ENCODE measurements at regions of chr17 and their contacts with region 1.

Region 1: GRCh38 chr17:28763804-28764266 is 20.0 kb downstream of the TRAF4 start:
- DNase-seq: peak; percentile 31 to 84 (median 70)
- ATAC-seq: peak; percentile 61 to 82 (median 75)
- H3K4me3 ChIP-seq: no peak overlapping the region
- H3K4me3 Mint-ChIP-seq: no peak overlapping the region
- H3K27ac ChIP-seq: no peak overlapping the region
- H3K27ac Mint-ChIP-seq: peak overlapping the region; percentile 53 to 73
- H3K4me1 ChIP-seq: no peaks in the 10 kb centered on the region
- H3K4me1 Mint-ChIP-seq: peaks cover 3 to 6% (median 4%) of the 10 kb centered on the region in 3 donors
- H3K27me3 ChIP-seq: no peaks in the 10 kb centered on the region
- H3K27me3 Mint-ChIP-seq: no peaks in the 10 kb centered on the region

Region 2: DNA sequence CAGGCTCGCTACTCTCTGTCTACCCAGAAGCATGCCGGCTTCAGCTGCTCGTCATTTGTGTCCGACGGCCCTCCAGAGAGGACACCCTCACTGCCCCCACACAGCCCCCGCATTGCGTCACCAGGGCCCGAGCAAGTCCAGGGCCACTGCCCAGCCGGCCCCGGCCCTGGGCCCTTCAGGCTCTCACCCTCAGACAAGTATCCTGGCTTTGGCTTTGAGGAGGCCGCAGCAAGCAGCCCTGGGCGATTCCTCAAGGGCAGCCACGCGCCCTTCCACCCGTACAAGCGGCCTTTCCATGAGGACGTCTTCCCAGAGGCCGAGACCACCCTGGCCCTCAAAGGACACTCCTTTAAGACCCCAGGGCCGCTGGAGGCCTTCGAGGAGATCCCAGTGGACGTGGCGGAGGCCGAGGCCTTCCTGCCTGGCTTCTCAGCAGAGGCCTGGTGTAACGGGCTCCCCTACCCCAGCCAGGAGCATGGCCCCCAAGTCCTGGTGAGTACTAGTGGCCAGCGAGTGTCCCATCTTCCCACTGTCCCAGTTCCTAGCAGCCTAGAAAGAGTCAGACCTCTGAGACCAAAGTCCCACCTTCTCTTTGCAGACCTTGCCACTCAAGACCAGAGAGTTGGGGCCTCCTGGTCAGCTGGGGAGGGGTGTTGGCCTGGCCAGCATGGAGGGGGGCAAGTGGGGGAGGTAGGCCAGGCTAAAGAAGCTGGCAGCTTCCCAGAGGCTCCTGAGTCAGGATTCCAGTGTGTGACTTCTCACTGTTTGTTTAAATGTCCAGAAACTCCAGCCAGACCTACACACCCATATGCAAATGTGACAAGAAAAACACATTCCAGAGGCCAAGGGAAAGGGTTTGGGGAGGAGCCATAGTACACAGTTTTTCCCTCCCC is 239.1 kb before region 1 on chr17:
- CTCF ChIA-PET with region 1: no interaction called
- POLR2A ChIA-PET with region 1: no interaction called
- DNase-seq: no peak
- ATAC-seq: no peak
- H3K4me3 ChIP-seq: no peak overlapping the region
- H3K4me3 Mint-ChIP-seq: no peak overlapping the region
- H3K27ac ChIP-seq: no peak overlapping the region
- H3K27ac Mint-ChIP-seq: no peak overlapping the region
- H3K4me1 ChIP-seq: no peaks in the 10 kb centered on the region
- H3K4me1 Mint-ChIP-seq: no peaks in the 10 kb centered on the region
- H3K27me3 ChIP-seq: peaks cover 0 to 4% of the 10 kb centered on the region in 2 experiments
- H3K27me3 Mint-ChIP-seq: no peaks in the 10 kb centered on the region

Region 3: GRCh38 chr17:28547623-28548416 is 216.0 kb before region 1 on chr17:
- CTCF ChIA-PET with region 1: no interaction called
- POLR2A ChIA-PET with region 1: no interaction called
- DNase-seq: peak in 31 of 35 experiments; percentile 16 to 71 (median 37)
- ATAC-seq: peak in 2 of 4 experiments; percentile 14 to 25
- H3K4me3 ChIP-seq: no peak overlapping the region
- H3K4me3 Mint-ChIP-seq: peak overlapping the region; percentile 28 to 97 (median 46)
- H3K27ac ChIP-seq: peak overlapping the region; percentile 94
- H3K27ac Mint-ChIP-seq: peak overlapping the region; percentile 90 to 93
- H3K4me1 ChIP-seq: peaks cover 34 to 55% of the 10 kb centered on the region in 2 experiments
- H3K4me1 Mint-ChIP-seq: peaks cover 46 to 51% (median 51%) of the 10 kb centered on the region in 3 donors
- H3K27me3 ChIP-seq: no peaks in the 10 kb centered on the region
- H3K27me3 Mint-ChIP-seq: no peaks in the 10 kb centered on the region

Region 4: GRCh38 chr17:28635506-28635905 is 128.3 kb before region 1 on chr17:
- CTCF ChIA-PET with region 1: no interaction called
- POLR2A ChIA-PET with region 1: no interaction called
- DNase-seq: no peak
- ATAC-seq: no peak
- H3K4me3 ChIP-seq: no peak overlapping the region
- H3K4me3 Mint-ChIP-seq: no peak overlapping the region
- H3K27ac ChIP-seq: no peak overlapping the region
- H3K27ac Mint-ChIP-seq: no peak overlapping the region
- H3K4me1 ChIP-seq: peaks cover 0 to 6% of the 10 kb centered on the region in 2 experiments
- H3K4me1 Mint-ChIP-seq: peaks cover 17 to 35% (median 25%) of the 10 kb centered on the region in 3 donors
- H3K27me3 ChIP-seq: no peaks in the 10 kb centered on the region
- H3K27me3 Mint-ChIP-seq: no peaks in the 10 kb centered on the region

Region 5: GRCh38 chr17:28726226-28727130 is 37.4 kb before region 1 on chr17 and contains the start of gene TLCD1:
- CTCF ChIA-PET with region 1: interaction called, 9 to 25 read pairs
- POLR2A ChIA-PET with region 1: no interaction called
- DNase-seq: peak; percentile 74 to 94 (median 86)
- ATAC-seq: peak; percentile 37 to 61 (median 53)
- H3K4me3 ChIP-seq: peak within 1 kb of the TSS; percentile 86 to 87
- H3K4me3 Mint-ChIP-seq: peak within 1 kb of the TSS; percentile 93 to 100 (median 95)
- H3K27ac ChIP-seq: peak within 1 kb of the TSS; percentile 100
- H3K27ac Mint-ChIP-seq: peak within 1 kb of the TSS; percentile 96 to 99
- H3K4me1 ChIP-seq: peaks cover 16 to 58% of the 10 kb centered on the region in 2 experiments
- H3K4me1 Mint-ChIP-seq: peaks cover 51 to 62% (median 59%) of the 10 kb centered on the region in 3 donors
- H3K27me3 ChIP-seq: no peaks in the 10 kb centered on the region
- H3K27me3 Mint-ChIP-seq: no peaks in the 10 kb centered on the region
- total RNA-seq, gene TLCD1: 1.2 to 1.8 (median 1.3) TPM in 4 of 5 donors, not detected in the other

Region 6: DNA sequence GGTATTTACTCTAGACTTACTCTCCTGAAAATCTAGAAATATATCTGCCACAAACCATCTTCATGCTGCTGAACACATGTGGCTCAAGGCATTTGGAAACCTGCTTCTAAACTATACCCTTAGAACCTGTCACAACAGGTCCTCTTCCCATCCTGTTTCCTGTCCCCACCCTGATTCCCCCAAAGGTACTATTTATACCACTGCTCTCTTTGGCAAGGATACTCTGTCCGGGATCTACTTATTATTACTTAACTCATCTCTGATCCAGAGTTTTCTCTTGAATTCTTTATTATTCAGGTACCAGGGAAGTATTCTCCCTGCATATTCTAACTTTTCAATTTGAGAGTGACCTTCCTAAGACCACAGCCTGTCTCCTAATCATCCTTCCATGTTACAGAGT is 13.3 kb after region 1 on chr17:
- CTCF ChIA-PET with region 1: interaction called, 12 to 13 read pairs
- POLR2A ChIA-PET with region 1: no interaction called
- DNase-seq: no peak
- ATAC-seq: no peak
- H3K4me3 ChIP-seq: no peak overlapping the region
- H3K4me3 Mint-ChIP-seq: no peak overlapping the region
- H3K27ac ChIP-seq: no peak overlapping the region
- H3K27ac Mint-ChIP-seq: peak overlapping the region; percentile 73 to 91
- H3K4me1 ChIP-seq: peaks cover 3 to 11% of the 10 kb centered on the region in 2 experiments
- H3K4me1 Mint-ChIP-seq: peaks cover 37 to 41% (median 38%) of the 10 kb centered on the region in 3 donors
- H3K27me3 ChIP-seq: no peaks in the 10 kb centered on the region
- H3K27me3 Mint-ChIP-seq: no peaks in the 10 kb centered on the region

Region 7: GRCh38 chr17:28854457-28855350 is 90.9 kb after region 1 on chr17 and contains the start of gene ERAL1:
- CTCF ChIA-PET with region 1: interaction called in 1 of 2 experiments, 18 read pairs
- POLR2A ChIA-PET with region 1: no interaction called
- DNase-seq: peak; percentile 64 to 89 (median 80)
- ATAC-seq: peak; percentile 100
- H3K4me3 ChIP-seq: peak within 1 kb of the TSS; percentile 74 to 89
- H3K4me3 Mint-ChIP-seq: peak within 1 kb of the TSS; percentile 88 to 92 (median 89)
- H3K27ac ChIP-seq: peak within 1 kb of the TSS; percentile 53
- H3K27ac Mint-ChIP-seq: peak within 1 kb of the TSS; percentile 75 to 96
- H3K4me1 ChIP-seq: peaks cover 7 to 14% of the 10 kb centered on the region in 2 experiments
- H3K4me1 Mint-ChIP-seq: peaks cover 8 to 21% (median 16%) of the 10 kb centered on the region in 3 donors
- H3K27me3 ChIP-seq: no peaks in the 10 kb centered on the region
- H3K27me3 Mint-ChIP-seq: no peaks in the 10 kb centered on the region
- total RNA-seq, gene ERAL1: 18.9 to 33.7 (median 29.0) TPM

Region 8: GRCh38 chr17:28951991-28952975 is 188.4 kb after region 1 on chr17:
- CTCF ChIA-PET with region 1: interaction called, 3 to 32 read pairs
- POLR2A ChIA-PET with region 1: no interaction called
- DNase-seq: peak; percentile 90 to 99 (median 96)
- ATAC-seq: peak; percentile 73 to 78 (median 75)
- H3K4me3 ChIP-seq: peak overlapping the region; percentile 58 to 90
- H3K4me3 Mint-ChIP-seq: no peak overlapping the region
- H3K27ac ChIP-seq: peak overlapping the region; percentile 99
- H3K27ac Mint-ChIP-seq: no peak overlapping the region
- H3K4me1 ChIP-seq: peaks cover 19 to 34% of the 10 kb centered on the region in 2 experiments
- H3K4me1 Mint-ChIP-seq: peaks cover 15 to 18% (median 17%) of the 10 kb centered on the region in 3 donors
- H3K27me3 ChIP-seq: peaks cover 0 to 1% of the 10 kb centered on the region in 2 experiments
- H3K27me3 Mint-ChIP-seq: no peaks in the 10 kb centered on the region

Region 9: DNA sequence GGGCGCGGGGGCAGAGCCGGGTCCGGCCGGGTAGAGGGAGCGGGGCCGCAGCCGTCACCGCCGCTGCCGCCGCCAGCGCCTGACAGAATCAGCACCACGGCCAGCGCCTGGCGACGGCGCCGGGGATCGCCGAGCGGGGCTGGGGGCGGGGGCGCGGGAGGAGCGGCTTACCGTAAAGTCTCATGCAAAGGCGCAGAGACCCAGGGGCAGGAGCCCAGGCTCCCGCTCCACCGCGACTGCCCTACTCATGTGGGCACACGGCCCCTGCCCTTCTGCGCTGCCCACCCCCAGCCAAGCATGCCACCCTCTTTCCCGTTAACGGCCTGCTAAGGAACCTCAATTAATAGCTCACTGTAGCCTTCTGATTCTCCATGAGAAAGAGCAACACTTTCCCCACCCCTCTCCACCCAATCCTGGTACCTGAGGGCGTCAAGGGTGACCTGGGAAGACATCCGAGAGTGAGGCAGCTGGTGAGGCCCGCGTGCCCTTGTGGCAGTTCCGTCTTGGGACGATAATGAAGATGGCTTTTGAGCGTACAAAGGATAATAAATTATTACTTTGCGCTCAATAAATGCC is 242.2 kb after region 1 on chr17 and contains the start of gene SEZ6:
- CTCF ChIA-PET with region 1: no interaction called
- POLR2A ChIA-PET with region 1: no interaction called
- DNase-seq: peak; percentile 13 to 73 (median 51)
- ATAC-seq: peak; percentile 63 to 88 (median 75)
- H3K4me3 ChIP-seq: no peak within 1 kb of the TSS
- H3K4me3 Mint-ChIP-seq: peak within 1 kb of the TSS in 1 of 3 donors; percentile 49
- H3K27ac ChIP-seq: no peak within 1 kb of the TSS
- H3K27ac Mint-ChIP-seq: no peak within 1 kb of the TSS
- H3K4me1 ChIP-seq: peaks cover 0 to 5% of the 10 kb centered on the region in 2 experiments
- H3K4me1 Mint-ChIP-seq: peaks cover 0 to 3% (median 2%) of the 10 kb centered on the region in 3 donors
- H3K27me3 ChIP-seq: peaks cover 0 to 85% of the 10 kb centered on the region in 2 experiments
- H3K27me3 Mint-ChIP-seq: peaks cover 44 to 73% of the 10 kb centered on the region in 2 donors
- total RNA-seq, gene SEZ6: 0.49 to 1.6 TPM in 2 of 5 donors, not detected in the others